Activated CD4-positive, alpha-beta T cell treated with anti-CD3 and anti-CD28 coated beads for 36 hours (primary cell): ENCODE measurements at regions of chr19 and their contacts with region 1.

Region 1: GRCh38 chr19:4471403-4472173 is 509 bp upstream of the HDGFL2 start:
- DNase-seq: peak; percentile 98
- ATAC-seq: peak; percentile 90
- H3K4me3 Mint-ChIP-seq: no peak overlapping the region
- H3K27ac Mint-ChIP-seq: no peak overlapping the region
- H3K4me1 Mint-ChIP-seq: peaks cover 21% of the 10 kb centered on the region
- H3K27me3 Mint-ChIP-seq: no peaks in the 10 kb centered on the region

Region 2: GRCh38 chr19:3762501-3763459 is 708.8 kb before region 1 on chr19 and contains the start of gene MRPL54:
- CTCF ChIA-PET with region 1: no interaction called
- POLR2A ChIA-PET with region 1: no interaction called
- intact Hi-C with region 1: loop called in 1 of 2 experiments (anchors 2 kb)
- DNase-seq: peak; percentile 100
- ATAC-seq: peak; percentile 88
- H3K4me3 Mint-ChIP-seq: peak within 1 kb of the TSS; percentile 100
- H3K27ac Mint-ChIP-seq: peak within 1 kb of the TSS; percentile 99
- H3K4me1 Mint-ChIP-seq: peaks cover 39% of the 10 kb centered on the region
- H3K27me3 Mint-ChIP-seq: no peaks in the 10 kb centered on the region
- total RNA-seq, gene MRPL54: 54.8 to 63.9 TPM

Region 3: DNA sequence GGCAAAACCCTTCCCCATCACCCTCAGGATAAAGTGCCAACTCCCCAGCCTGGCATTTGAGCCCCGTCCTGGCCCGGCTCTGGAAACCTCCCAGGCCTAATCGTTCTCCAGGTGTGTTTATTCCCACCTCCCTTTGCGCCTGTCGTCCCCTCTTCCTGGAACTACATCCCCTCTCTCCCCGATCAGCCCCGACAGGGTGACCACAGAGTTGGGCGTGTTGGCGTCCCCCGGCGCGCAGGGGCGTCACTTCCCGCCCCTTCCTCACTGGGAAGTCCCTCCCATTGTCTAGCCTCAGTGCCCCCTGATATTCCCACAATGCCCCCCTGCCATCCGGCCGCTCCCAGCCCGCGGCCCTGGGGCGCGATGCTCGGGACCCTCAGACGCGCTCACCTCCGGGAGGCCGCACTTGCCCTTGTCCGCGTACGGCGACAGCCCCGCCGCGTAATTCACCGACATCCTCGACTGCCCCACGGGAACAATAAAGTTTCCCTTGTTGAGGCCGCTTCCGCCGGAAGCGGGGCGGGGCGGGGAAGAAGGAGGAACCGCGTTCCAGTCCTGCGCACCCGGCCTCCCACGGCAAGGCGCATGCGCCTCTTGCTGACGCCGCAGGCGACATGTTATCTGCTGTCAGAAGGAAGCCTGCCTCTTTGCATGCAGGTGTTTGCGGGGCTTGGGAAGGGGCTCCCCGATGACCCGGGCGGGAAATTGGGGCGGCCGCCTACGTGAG is 289.3 kb before region 1 on chr19 and contains the starts of genes ANKRD24 and SIRT6:
- CTCF ChIA-PET with region 1: no interaction called
- POLR2A ChIA-PET with region 1: no interaction called
- intact Hi-C with region 1: loop called in 1 of 2 experiments (anchors 1 kb)
- DNase-seq: peak; percentile 98
- ATAC-seq: peak; percentile 84
- H3K4me3 Mint-ChIP-seq: peak within 1 kb of the TSS; percentile 92
- H3K27ac Mint-ChIP-seq: peak within 1 kb of the TSS; percentile 93
- H3K4me1 Mint-ChIP-seq: peaks cover 30% of the 10 kb centered on the region
- H3K27me3 Mint-ChIP-seq: no peaks in the 10 kb centered on the region
- total RNA-seq, gene ANKRD24: 1.1 to 1.3 TPM
- total RNA-seq, gene SIRT6: 26.2 to 29.4 TPM

Region 4: GRCh38 chr19:4457654-4458395 is 13.8 kb before region 1 on chr19 and contains the start of gene UBXN6:
- CTCF ChIA-PET with region 1: interaction called, 11 read pairs
- POLR2A ChIA-PET with region 1: interaction called, 17 read pairs
- intact Hi-C with region 1: loop called (anchors 1 kb)
- DNase-seq: peak; percentile 99
- ATAC-seq: peak; percentile 93
- H3K4me3 Mint-ChIP-seq: peak within 1 kb of the TSS; percentile 86
- H3K27ac Mint-ChIP-seq: peak within 1 kb of the TSS; percentile 86
- H3K4me1 Mint-ChIP-seq: peaks cover 19% of the 10 kb centered on the region
- H3K27me3 Mint-ChIP-seq: no peaks in the 10 kb centered on the region
- total RNA-seq, gene UBXN6: 32.9 to 38.4 TPM

Region 5: DNA sequence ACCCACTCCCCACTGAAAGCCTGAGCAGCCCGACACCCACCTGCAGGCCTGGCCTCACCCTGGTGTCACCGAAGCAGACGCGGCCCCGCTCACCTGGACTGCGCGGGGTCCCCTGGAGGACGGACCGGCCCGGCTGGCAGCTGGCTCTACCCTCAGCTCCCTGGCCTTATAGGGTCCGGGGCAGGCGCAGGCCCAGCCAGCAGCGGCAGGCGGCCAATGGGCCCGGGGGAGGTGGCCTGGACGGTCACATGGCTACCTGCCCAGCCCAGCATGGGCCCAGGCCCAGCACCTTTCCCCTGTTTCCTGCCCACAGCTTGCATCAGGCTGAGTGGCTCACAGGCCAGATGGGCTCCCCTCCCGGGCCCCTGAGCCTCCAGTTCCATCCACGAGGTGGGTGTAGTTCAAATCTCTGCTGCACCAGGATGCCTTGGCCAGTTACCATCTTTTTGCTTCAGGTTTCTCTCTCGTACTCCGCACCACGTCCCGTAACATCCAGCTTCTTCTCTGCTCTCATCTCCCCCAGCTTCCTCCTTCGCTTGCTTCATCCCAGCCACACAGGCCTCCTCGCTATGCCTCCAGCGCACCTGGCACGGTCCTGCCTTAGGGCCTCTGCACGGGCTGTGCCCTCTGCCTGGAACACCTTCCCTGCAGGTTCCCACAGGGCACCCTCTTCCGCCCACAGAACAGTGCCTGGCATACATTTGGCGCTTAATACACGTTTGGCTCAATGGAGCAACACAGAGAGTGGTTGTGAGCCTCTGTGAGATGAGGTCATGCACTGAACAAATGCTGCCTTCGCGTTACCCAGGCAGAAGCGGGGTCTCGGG is 47.0 kb after region 1 on chr19 and contains the start of gene PLIN4:
- CTCF ChIA-PET with region 1: no interaction called
- POLR2A ChIA-PET with region 1: no interaction called
- intact Hi-C with region 1: no loop called
- DNase-seq: no peak
- ATAC-seq: no peak
- H3K4me3 Mint-ChIP-seq: no peak within 1 kb of the TSS
- H3K27ac Mint-ChIP-seq: no peak within 1 kb of the TSS
- H3K4me1 Mint-ChIP-seq: no peaks in the 10 kb centered on the region
- H3K27me3 Mint-ChIP-seq: no peaks in the 10 kb centered on the region
- total RNA-seq, gene PLIN4: not detected

Region 6: DNA sequence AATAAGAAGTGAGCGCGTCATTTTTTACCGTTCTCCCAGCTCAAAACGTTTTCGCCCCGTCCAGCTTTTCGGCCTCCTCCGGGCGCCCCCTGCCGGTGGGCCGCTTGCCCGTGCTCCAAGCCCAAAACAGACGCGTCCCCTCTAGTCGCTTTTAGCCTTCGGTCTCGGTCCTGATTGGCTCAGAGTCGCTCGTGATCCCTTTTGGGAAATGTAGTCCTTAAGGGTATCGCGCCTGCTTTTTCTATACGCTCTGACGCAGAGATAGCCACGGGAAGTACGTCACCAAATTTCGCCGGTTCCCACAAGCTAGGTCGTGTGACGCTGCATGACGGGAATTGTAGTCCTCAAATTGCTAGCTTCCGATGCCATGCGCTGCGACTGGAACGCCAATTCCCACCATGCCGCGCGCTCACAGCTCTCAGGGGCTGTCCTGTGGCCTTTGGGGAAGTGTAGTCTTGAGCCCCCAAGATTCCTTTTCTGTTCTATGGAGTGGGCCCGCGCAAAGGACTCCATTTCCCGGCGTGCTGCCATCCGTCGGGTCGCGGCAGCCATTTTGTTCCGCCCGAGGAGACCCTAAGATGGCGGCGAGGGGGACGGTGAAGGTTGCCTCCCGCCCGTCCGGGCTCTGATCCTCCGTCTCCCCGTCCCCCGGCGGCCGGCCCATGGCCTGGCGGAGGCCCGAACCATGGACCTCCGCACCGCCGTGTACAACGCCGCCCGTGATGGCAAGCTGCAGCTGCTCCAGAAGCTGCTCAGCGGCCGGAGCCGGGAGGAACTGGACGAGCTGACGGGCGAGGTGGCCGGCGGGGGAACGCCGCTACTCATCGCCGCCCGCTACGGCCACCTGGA is 319.8 kb after region 1 on chr19 and contains the start of gene FEM1A:
- CTCF ChIA-PET with region 1: interaction called, 3 read pairs
- POLR2A ChIA-PET with region 1: interaction called, 4 read pairs
- intact Hi-C with region 1: loop called in 1 of 2 experiments (anchors 1 kb)
- DNase-seq: peak; percentile 99
- ATAC-seq: peak; percentile 97
- H3K4me3 Mint-ChIP-seq: peak within 1 kb of the TSS; percentile 84
- H3K27ac Mint-ChIP-seq: peak within 1 kb of the TSS; percentile 85
- H3K4me1 Mint-ChIP-seq: peaks cover 40% of the 10 kb centered on the region
- H3K27me3 Mint-ChIP-seq: no peaks in the 10 kb centered on the region
- total RNA-seq, gene FEM1A: 9.2 to 10.6 TPM

Region 7: GRCh38 chr19:4968462-4969291 is 497.1 kb after region 1 on chr19 and contains the start of gene KDM4B:
- CTCF ChIA-PET with region 1: no interaction called
- POLR2A ChIA-PET with region 1: no interaction called
- intact Hi-C with region 1: loop called in 1 of 2 experiments (anchors 2 kb)
- DNase-seq: peak; percentile 100
- ATAC-seq: peak; percentile 96
- H3K4me3 Mint-ChIP-seq: peak within 1 kb of the TSS; percentile 91
- H3K27ac Mint-ChIP-seq: peak within 1 kb of the TSS; percentile 90
- H3K4me1 Mint-ChIP-seq: peaks cover 30% of the 10 kb centered on the region
- H3K27me3 Mint-ChIP-seq: no peaks in the 10 kb centered on the region
- total RNA-seq, gene KDM4B: 33.9 to 35.8 TPM